ENCODE measurements at regions of chr2 and their contacts with region 1.

Region 1: DNA sequence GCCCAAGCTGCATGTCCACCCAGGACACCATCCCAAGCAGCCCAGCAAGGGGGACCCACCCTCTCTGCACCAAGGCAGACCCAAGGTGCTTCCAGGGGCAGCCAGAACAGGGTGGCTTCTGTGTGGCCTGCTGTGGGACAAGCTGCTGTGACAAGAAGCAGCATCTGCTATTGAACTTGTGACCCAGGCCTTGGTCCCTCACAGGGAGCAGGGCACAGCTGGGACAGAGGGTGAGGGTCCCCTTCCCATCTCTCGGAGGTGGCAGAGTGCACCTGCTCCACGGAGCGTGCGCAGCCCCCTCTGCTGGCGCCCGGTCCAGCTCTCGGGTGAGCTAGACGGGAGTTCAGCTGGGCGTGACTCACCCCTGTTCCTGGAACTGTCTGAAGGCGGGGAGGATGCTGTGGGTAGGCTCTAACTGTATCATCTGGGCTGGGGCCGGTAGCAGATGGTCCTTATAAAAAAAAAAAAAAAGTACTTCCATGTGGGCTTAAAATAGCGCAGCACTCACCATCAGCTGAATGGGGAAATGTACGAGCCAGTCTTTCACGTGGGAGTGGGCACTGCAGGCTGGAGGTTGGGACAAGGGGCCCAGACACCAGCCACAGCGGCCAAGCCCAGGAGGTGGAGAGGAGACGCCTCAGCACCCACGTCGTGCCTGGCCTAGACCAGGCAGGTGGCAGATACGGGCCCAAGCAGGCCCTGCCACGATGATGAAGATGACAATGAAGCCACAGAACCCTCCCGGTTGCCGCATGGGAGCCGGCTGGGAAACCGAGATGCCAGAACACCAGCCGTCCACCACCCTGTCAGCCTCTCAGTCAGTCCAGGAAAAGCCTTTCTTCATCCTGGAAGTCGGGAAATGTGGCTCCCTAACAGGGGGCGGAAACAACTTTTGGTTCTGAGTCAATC is 136.8 kb upstream of the ID2 start:
- DNase-seq: peak; percentile 90
- H3K4me3 Mint-ChIP-seq: no peak overlapping the region
- H3K27ac Mint-ChIP-seq: peak overlapping the region; percentile 94
- H3K4me1 Mint-ChIP-seq: peaks cover 81% of the 10 kb centered on the region
- H3K27me3 Mint-ChIP-seq: peaks cover 4% of the 10 kb centered on the region

Region 2: GRCh38 chr2:8334866-8335325 is 210.1 kb before region 1 on chr2:
- CTCF ChIA-PET with region 1: no interaction called
- DNase-seq: no peak
- H3K4me3 Mint-ChIP-seq: no peak overlapping the region
- H3K27ac Mint-ChIP-seq: no peak overlapping the region
- H3K4me1 Mint-ChIP-seq: peaks cover 25% of the 10 kb centered on the region
- H3K27me3 Mint-ChIP-seq: peaks cover 14% of the 10 kb centered on the region

Region 3: DNA sequence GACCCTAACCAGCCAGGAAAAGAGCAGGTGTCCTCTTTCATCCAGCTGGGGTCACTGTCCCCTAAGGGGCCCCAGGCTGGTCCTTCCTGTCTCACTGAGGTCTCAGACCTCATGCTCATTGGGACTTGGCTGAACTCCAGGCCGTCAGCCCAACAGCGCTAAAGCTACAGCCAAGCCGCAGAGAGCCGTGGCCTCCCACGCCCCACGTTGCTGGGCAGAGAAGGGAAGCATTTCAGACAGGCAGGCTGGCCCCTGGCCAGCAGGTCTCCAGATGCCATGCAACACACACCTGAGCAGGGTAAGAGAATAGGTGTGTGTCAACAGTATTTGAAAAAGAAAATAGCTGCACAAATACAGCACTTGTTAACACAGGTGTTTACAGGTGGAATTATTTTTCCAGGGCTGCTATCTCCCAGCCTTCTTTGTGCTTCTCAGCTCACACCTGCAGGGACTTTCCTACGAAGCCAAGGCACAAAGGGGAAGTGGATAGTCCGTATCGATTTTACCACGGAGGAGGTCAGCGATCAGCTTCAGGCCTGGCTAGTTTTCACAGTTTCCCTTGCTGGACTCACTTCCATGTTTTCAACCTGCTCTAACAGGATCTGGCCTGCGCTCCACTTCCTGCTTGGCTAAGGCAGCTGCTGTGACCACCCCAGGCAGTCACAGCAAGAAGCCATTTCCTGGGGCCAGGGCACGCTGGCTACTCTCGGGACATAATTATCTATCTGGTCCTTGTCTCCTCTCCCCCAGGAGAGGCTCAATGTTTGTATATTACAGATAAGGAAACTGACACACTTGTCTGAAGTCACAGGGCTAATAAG is 19.2 kb before region 1 on chr2:
- CTCF ChIA-PET with region 1: no interaction called
- DNase-seq: no peak
- H3K4me3 Mint-ChIP-seq: no peak overlapping the region
- H3K27ac Mint-ChIP-seq: peak overlapping the region; percentile 17
- H3K4me1 Mint-ChIP-seq: peaks cover 51% of the 10 kb centered on the region
- H3K27me3 Mint-ChIP-seq: peaks cover 10% of the 10 kb centered on the region

Region 4: DNA sequence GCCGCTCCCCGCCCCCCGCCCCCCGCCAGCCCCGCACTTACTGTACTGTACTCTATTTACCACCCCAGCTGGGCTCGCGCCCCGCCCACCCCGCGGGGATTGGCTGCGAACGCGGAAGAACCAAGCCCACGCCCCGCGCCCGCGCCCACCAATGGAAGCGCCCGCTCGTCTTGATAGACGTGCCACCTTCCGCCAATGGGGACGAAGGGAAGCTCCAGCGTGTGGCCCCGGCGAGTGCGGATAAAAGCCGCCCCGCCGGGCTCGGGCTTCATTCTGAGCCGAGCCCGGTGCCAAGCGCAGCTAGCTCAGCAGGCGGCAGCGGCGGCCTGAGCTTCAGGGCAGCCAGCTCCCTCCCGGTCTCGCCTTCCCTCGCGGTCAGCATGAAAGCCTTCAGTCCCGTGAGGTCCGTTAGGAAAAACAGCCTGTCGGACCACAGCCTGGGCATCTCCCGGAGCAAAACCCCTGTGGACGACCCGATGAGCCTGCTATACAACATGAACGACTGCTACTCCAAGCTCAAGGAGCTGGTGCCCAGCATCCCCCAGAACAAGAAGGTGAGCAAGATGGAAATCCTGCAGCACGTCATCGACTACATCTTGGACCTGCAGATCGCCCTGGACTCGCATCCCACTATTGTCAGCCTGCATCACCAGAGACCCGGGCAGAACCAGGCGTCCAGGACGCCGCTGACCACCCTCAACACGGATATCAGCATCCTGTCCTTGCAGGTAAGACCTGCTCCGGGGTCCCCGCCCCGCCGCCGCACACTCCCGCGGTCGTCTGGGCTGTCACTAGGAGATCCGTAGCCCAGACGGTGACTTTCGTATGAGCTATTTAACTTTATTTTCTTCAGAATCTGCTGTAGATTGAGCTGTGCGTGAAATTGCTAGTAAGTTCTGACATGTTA is 137.0 kb after region 1 on chr2 and contains the start of gene ID2:
- CTCF ChIA-PET with region 1: interaction called, 21 read pairs
- DNase-seq: peak; percentile 99
- H3K4me3 Mint-ChIP-seq: peak within 1 kb of the TSS; percentile 98
- H3K27ac Mint-ChIP-seq: peak within 1 kb of the TSS; percentile 95
- H3K4me1 Mint-ChIP-seq: peaks cover 62% of the 10 kb centered on the region
- H3K27me3 Mint-ChIP-seq: peaks cover 26% of the 10 kb centered on the region